ENCODE measurements at regions of chr9 and their contacts with region 1.

Region 1: DNA sequence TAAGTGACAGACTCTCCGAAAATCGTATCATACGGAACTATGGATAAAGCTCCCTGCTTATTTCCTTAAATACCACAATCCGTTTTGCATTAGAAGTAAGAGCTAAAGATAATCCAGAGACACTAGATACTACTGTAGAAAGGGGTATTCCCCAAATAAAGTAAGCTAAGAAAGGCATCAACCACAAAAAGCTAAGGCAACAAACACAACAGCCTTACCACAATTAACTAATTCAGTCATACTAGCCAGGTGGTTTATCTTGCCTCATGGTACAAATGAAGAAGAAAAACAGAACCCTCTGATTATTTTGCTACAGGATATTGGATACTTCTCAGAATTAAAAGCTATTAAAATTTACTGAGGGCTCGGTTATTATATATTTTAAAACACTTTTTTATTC is 14.1 kb downstream of the ERP44 start:
- DNase-seq: no peak
- H3K4me3 ChIP-seq: no peak overlapping the region
- H3K27ac ChIP-seq: no peak overlapping the region
- H3K4me1 ChIP-seq: peaks cover 33% of the 10 kb centered on the region
- H3K27me3 ChIP-seq: no peaks in the 10 kb centered on the region
- CTCF ChIP-seq: no peak
- POLR2A ChIP-seq: no peak

Region 2: DNA sequence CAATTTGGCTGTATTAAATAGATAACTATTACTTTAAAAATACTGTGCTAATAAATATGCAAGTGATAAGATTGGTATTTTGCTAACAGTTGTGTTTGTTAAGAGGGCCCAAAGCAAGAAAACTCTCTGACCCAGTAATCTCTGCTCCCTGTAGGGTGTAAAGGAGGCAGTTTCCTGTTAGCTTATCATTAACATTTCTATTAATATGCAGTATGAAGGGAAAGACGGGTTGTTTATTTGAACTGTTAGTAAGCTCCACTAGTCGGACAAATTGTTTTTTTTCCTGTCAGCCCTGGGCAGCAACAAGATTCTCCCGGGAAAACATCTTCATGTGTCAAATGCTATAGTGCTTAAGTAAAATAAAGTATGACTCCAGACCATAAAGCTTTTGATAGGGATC is 21.5 kb before region 1 on chr9:
- CTCF ChIA-PET with region 1: interaction called, 4 read pairs
- POLR2A ChIA-PET with region 1: no interaction called
- dilution Hi-C with region 1: no loop called
- intact Hi-C with region 1: loop called (anchors 2 kb)
- DNase-seq: peak; percentile 53
- H3K4me3 ChIP-seq: no peak overlapping the region
- H3K27ac ChIP-seq: no peak overlapping the region
- H3K4me1 ChIP-seq: peaks cover 3% of the 10 kb centered on the region
- H3K27me3 ChIP-seq: no peaks in the 10 kb centered on the region
- CTCF ChIP-seq: no peak
- POLR2A ChIP-seq: no peak

Region 3: GRCh38 chr9:100150214-100150613 is 65.5 kb after region 1 on chr9:
- CTCF ChIA-PET with region 1: no interaction called
- POLR2A ChIA-PET with region 1: no interaction called
- dilution Hi-C with region 1: no loop called
- intact Hi-C with region 1: no loop called
- DNase-seq: peak; percentile 26
- H3K4me3 ChIP-seq: no peak overlapping the region
- H3K27ac ChIP-seq: no peak overlapping the region
- H3K4me1 ChIP-seq: peaks cover 5% of the 10 kb centered on the region
- H3K27me3 ChIP-seq: no peaks in the 10 kb centered on the region
- CTCF ChIP-seq: no peak
- POLR2A ChIP-seq: no peak